ENCODE measurements at regions of chr18 and their contacts with region 1.

Region 1: DNA sequence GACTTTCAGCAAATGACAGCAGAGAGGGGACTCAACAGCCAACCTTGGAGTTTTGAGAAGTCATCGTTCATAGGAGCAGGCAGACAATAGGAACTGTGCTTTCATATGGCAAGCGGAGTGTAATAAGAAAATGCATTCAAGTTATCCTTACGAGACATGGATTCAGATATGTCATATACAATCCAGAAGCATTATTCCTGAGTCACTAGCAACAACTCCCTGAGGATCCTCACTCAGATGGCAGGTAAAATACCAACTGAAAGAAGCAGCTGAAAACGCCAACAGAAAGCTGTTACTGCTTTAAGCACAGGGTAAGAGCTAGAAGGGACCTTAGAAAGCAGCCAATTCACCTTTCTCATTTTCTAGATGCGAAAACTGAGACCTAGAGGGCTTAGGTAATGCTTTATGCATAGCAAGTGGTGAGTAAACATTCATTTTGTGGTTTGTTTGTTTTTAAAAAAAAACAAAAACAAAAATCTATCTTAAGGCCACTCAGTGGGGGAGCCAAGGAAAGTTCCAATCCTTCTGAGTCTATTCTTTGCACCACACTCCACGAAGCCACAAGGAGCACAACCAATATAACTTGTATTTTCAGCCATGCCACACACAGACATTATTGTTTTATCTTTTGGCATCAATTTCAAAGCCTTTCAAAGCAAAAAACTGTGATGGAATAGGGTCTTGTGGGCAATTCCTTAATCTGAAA is 89.1 kb upstream of the RIOK3 start:
- DNase-seq: no peak
- ATAC-seq: no peak
- H3K4me3 ChIP-seq: no peak overlapping the region
- H3K4me3 Mint-ChIP-seq: no peak overlapping the region
- H3K27ac ChIP-seq: no peak overlapping the region
- H3K27ac Mint-ChIP-seq: no peak overlapping the region
- H3K4me1 ChIP-seq: peaks cover 5 to 7% of the 10 kb centered on the region in 2 donors
- H3K4me1 Mint-ChIP-seq: peaks cover 8% of the 10 kb centered on the region
- H3K27me3 ChIP-seq: no peaks in the 10 kb centered on the region
- H3K27me3 Mint-ChIP-seq: no peaks in the 10 kb centered on the region
- CTCF ChIP-seq: no peak

Region 2: GRCh38 chr18:23207191-23207955 is 156.6 kb before region 1 on chr18:
- CTCF ChIA-PET with region 1: no interaction called
- POLR2A ChIA-PET with region 1: interaction called, 13 read pairs
- intact Hi-C with region 1: no loop called
- DNase-seq: no peak
- ATAC-seq: no peak
- H3K4me3 ChIP-seq: no peak overlapping the region
- H3K4me3 Mint-ChIP-seq: no peak overlapping the region
- H3K27ac ChIP-seq: no peak overlapping the region
- H3K27ac Mint-ChIP-seq: no peak overlapping the region
- H3K4me1 ChIP-seq: no peaks in the 10 kb centered on the region
- H3K4me1 Mint-ChIP-seq: peaks cover 8% of the 10 kb centered on the region
- H3K27me3 ChIP-seq: peaks cover 0 to 8% (median 0%) of the 10 kb centered on the region in 4 experiments
- H3K27me3 Mint-ChIP-seq: peaks cover 22% of the 10 kb centered on the region
- CTCF ChIP-seq: peak; percentile 19